Calu3 (cell line): ENCODE measurements at regions of chr18 and their contacts with region 1.

Region 1: DNA sequence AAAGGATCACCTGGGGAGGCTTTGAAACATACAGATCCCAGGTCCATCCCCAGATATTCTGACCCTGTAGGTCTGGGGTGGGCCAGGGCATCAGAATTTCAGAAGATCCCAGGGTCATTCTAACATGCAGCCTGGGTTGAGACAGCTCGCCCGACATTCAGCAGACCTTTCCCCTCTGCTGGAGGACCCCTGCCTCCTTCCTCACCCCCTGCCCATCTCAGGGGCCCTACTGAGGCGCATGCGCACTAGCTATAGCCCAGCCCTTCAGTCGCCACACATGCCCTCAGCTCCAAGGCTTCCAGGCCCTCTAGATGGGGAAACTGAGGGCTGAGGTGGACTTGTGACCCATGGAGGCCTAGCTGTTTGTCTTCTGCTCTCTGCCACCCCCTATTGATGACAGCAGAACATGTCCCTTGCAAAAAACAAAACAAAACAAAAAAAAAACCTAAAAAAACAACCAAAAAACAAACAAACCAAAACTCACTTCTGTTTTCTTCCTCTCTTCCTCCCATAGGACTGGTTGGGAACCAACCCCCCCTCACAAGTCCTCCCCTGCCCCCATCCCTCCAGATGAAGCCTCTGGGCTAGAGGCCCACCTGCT is 91.3 kb downstream of the ZBTB7C start:
- DNase-seq: no peak
- H3K4me3 Mint-ChIP-seq: no peak overlapping the region
- H3K27ac Mint-ChIP-seq: no peak overlapping the region
- H3K4me1 Mint-ChIP-seq: no peaks in the 10 kb centered on the region
- H3K27me3 Mint-ChIP-seq: peaks cover 58% of the 10 kb centered on the region
- CTCF ChIP-seq: peak; percentile 18

Region 2: GRCh38 chr18:48206887-48207286 is 111.0 kb before region 1 on chr18:
- CTCF ChIA-PET with region 1: interaction called, 10 read pairs
- intact Hi-C with region 1: no loop called
- DNase-seq: no peak
- H3K4me3 Mint-ChIP-seq: no peak overlapping the region
- H3K27ac Mint-ChIP-seq: no peak overlapping the region
- H3K4me1 Mint-ChIP-seq: peaks cover 13% of the 10 kb centered on the region
- H3K27me3 Mint-ChIP-seq: peaks cover 51% of the 10 kb centered on the region
- CTCF ChIP-seq: no peak

Region 3: GRCh38 chr18:49321800-49322461 is 1004.0 kb after region 1 on chr18:
- CTCF ChIA-PET with region 1: no interaction called
- intact Hi-C with region 1: no loop called
- DNase-seq: no peak
- H3K4me3 Mint-ChIP-seq: no peak overlapping the region
- H3K27ac Mint-ChIP-seq: no peak overlapping the region
- H3K4me1 Mint-ChIP-seq: peaks cover 12% of the 10 kb centered on the region
- H3K27me3 Mint-ChIP-seq: no peaks in the 10 kb centered on the region
- CTCF ChIP-seq: no peak